ENCODE measurements at regions of chr17 and their contacts with region 1.

Region 1: DNA sequence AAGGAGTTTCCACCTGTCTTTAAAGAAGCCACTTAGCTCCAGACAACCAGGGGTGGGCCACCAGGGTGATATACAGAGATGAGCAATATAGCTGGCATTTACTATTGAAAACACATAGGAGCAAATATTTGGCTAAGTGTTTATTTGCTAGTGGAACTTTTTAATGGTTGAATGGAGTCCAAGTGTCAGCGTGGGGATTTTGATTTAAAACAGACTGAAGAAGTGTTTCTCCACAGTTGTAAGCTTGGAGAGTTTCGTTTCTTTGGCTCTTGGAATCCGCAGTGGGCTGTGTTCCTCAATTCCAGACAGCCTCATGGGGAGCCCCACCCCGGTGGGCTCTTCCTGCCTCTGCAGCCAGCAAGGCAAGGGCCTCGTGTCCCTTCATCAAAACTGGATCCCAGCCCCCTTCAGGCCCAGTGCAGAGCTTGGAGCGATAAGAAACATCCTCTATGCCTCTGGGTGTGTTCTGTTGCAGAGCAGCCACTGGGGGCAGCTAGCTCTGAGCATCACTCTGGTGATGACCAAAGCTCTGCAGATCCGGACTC is 36.1 kb downstream of the NOG start:
- DNase-seq: no peak
- H3K4me3 ChIP-seq: no peak overlapping the region
- H3K27ac ChIP-seq: no peak overlapping the region
- H3K4me1 ChIP-seq: no peaks in the 10 kb centered on the region
- H3K27me3 ChIP-seq: no peaks in the 10 kb centered on the region
- CTCF ChIP-seq: peak; percentile 40 to 44

Region 2: DNA sequence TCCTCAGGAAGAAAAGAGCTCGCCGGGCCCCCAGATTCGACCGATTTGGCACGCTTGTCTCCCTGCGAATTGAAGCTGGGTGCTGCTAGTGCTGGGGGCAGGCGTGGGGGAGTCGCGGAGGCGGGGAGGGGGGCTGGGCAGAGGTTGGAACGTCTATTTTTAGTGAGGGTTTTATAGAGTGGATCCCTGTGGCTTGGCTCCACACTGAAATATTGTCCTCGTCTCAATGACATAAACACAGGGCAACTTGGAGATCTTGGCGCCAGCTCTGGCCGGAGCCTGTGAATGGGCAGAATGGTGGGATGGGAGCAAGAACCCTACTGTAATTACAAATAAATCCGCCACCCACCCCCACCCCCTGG is 51.8 kb before region 1 on chr17:
- CTCF ChIA-PET with region 1: no interaction called
- dilution Hi-C with region 1: loop called (anchors 5 kb)
- in situ Hi-C with region 1: no loop called
- intact Hi-C with region 1: no loop called
- DNase-seq: no peak
- H3K4me3 ChIP-seq: no peak overlapping the region
- H3K27ac ChIP-seq: no peak overlapping the region
- H3K4me1 ChIP-seq: no peaks in the 10 kb centered on the region
- H3K27me3 ChIP-seq: peaks cover 10% of the 10 kb centered on the region
- CTCF ChIP-seq: no peak